ENCODE measurements at regions of chr2 and their contacts with region 1.

Region 1: GRCh38 chr2:10135296-10136089 is 13.0 kb downstream of the RRM2 start:
- DNase-seq: no peak
- H3K4me3 ChIP-seq: no peak overlapping the region
- H3K27ac ChIP-seq: no peak overlapping the region
- H3K4me1 ChIP-seq: peaks cover 2 to 14% (median 5%) of the 10 kb centered on the region in 4 experiments; a peak in 5 of 7 replicates
- H3K27me3 ChIP-seq: no peaks in the 10 kb centered on the region
- CTCF ChIP-seq: no peak
- EP300 ChIP-seq: no peak
- POLR2A ChIP-seq: no peak; a peak in 1 of 3 replicates
- RAD21 ChIP-seq: no peak

Region 2: GRCh38 chr2:10103179-10103732 is 32.2 kb before region 1 on chr2:
- CTCF ChIA-PET with region 1: no interaction called
- POLR2A ChIA-PET with region 1: no interaction called
- DNase-seq: no peak
- H3K4me3 ChIP-seq: no peak overlapping the region
- H3K27ac ChIP-seq: no peak overlapping the region
- H3K4me1 ChIP-seq: no peaks in the 10 kb centered on the region
- H3K27me3 ChIP-seq: no peaks in the 10 kb centered on the region
- CTCF ChIP-seq: no peak
- EP300 ChIP-seq: no peak
- POLR2A ChIP-seq: no peak
- RAD21 ChIP-seq: no peak

Region 3: DNA sequence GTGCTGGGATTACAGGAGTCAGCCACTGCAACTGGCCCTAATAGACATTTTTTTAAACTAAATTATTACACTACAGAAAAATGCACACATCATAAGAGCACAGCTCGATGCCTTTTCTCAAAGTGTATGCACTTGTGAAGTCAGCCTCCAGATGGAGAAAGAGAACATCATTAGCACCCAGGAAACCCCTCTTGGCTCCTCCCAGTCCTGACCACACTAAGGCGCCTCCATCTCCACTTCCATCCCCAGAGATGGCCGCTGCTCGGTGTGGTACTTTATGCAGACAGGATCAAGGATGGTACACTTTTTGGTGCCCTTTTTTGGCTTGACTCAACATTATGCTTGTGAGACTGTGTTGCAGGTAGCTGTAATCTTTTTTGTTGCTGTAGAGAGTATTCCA is 21.8 kb after region 1 on chr2:
- CTCF ChIA-PET with region 1: interaction called, 169 read pairs
- POLR2A ChIA-PET with region 1: interaction called, 12 read pairs
- DNase-seq: no peak
- H3K4me3 ChIP-seq: no peak overlapping the region
- H3K27ac ChIP-seq: no peak overlapping the region
- H3K4me1 ChIP-seq: peaks cover 0 to 7% (median 0%) of the 10 kb centered on the region in 4 experiments; a peak in 1 of 7 replicates
- H3K27me3 ChIP-seq: no peaks in the 10 kb centered on the region
- CTCF ChIP-seq: peak in 1 of 3 experiments; percentile 2; a peak in 1 of 4 replicates
- EP300 ChIP-seq: no peak
- POLR2A ChIP-seq: no peak
- RAD21 ChIP-seq: peak; percentile 15 to 27; a peak in 3 of 4 replicates

Measured in H1 (cell line).